GM23248 (cell line): ENCODE measurements at regions of chr2 and their contacts with region 1.

Region 1: DNA sequence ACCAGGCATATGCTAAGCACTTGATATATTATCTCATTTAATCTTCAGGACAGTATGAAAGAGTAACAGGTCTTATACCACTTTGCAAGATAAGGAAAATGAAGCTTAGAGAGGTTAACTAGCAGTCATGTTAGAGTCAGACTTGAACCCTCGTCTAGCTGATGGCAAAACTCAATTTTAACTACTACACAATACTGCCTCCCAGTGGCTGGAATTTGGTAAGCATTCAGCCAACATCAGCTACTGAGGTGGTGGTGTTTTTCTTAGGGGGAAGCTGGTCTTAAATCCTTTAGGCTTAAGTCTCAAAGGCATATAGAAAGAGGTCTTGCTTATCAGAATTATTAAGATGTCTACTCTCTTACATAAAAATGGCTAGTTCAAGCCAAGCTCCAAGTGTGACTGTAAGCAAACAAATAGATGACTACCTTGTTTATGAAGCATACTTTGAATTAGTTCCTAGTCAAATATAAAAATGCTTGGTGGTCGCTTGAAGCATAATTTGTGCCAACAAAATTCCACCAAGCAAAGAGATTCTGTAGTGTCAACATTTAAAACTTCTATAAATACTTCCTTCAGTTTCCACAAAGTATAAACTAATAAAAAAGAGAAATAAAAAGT is 325.4 kb upstream of the FIGN start:
- DNase-seq: peak; percentile 47
- H3K4me3 ChIP-seq: no peak overlapping the region
- H3K27ac ChIP-seq: no peak overlapping the region
- H3K4me1 ChIP-seq: no peaks in the 10 kb centered on the region
- H3K27me3 ChIP-seq: no peaks in the 10 kb centered on the region; the same call in 1 of the 2 replicates

Region 2: GRCh38 chr2:163345908-163346573 is 715.2 kb before region 1 on chr2:
- in situ Hi-C with region 1: loop called (anchors 25 kb)
- DNase-seq: peak; percentile 69
- H3K4me3 ChIP-seq: peak overlapping the region; percentile 29; the same call in 1 of the 2 replicates
- H3K27ac ChIP-seq: no peak overlapping the region
- H3K4me1 ChIP-seq: peaks cover 3% of the 10 kb centered on the region; the same call in 1 of the 2 replicates
- H3K27me3 ChIP-seq: no peaks in the 10 kb centered on the region